ENCODE measurements at regions of chr16 and their contacts with region 1.

Region 1: GRCh38 chr16:3443108-3444031 is at the starts of genes NAA60 and ZNF597:
- DNase-seq: peak; percentile 85
- H3K4me3 ChIP-seq: peak within 1 kb of the TSS; percentile 66 to 68
- H3K27ac ChIP-seq: peak within 1 kb of the TSS; percentile 58 to 83
- H3K4me1 ChIP-seq: peaks cover 0 to 3% of the 10 kb centered on the region in 2 experiments; a peak in 1 of 4 replicates
- H3K27me3 ChIP-seq: no peaks in the 10 kb centered on the region
- CTCF ChIP-seq: no peak
- EP300 ChIP-seq: no peak
- RAD21 ChIP-seq: no peak
- polyA plus RNA-seq, gene NAA60: 17.2 and 21.5 TPM in 2 replicates
- polyA plus RNA-seq, gene ZNF597: 1.1 and 1.3 TPM in 2 replicates

Region 2: DNA sequence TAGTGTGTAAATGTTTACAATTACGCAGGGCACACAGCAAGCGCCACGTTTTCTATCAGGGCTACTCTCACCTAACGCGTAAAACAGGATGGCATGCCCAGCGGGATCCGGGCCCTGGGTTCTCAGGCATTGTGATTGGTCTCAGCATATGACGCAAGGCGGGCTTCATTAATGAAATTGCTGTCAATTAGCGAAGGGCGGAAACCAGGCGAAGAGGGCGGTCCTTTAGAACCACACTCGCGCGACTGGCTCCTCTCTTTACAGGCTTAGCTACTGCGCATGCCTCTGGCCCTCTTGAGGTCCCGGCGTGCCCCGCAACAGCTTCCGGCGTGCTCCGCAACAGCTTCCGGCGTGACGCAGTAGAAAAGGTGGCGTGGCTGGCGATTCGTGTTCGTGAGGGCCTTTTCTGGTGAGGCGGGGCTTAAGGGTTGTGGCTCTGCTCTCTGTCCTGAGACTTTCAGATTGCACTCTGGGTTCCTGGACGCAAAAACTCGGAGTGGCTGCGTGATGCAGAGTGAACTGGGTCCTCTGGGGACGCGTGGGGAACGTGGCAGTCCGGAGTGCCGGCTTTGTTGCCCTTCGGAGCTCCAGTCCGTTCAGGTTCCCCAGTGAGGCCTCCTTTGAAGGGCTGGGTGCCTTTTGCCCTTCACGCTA is 78.5 kb before region 1 on chr16:
- CTCF ChIA-PET with region 1: no interaction called
- POLR2A ChIA-PET with region 1: interaction called, 11 read pairs
- DNase-seq: peak; percentile 85
- H3K4me3 ChIP-seq: peak overlapping the region; percentile 56 to 68
- H3K27ac ChIP-seq: peak overlapping the region; percentile 72 to 81
- H3K4me1 ChIP-seq: no peaks in the 10 kb centered on the region; a peak in 1 of 4 replicates
- H3K27me3 ChIP-seq: no peaks in the 10 kb centered on the region
- CTCF ChIP-seq: no peak
- EP300 ChIP-seq: no peak
- RAD21 ChIP-seq: no peak

Region 3: DNA sequence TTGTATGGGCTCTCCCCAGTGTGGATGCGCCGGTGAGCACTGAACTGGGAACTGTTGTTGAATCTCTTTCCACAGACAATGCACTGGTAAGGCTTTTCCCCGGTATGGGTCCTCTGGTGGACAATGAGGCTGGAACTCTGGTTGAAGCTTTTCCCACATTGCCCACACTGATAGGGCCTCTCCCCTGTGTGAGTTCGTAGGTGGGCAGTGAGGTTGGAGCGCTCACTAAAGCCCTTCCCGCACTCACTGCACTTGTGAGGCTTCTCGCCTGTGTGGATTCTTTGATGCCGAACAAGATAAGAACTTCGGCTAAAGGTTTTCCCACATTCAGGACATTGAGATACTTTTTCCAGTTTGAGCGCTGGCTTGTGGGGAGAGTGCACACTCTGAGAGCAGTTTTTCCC is 60.3 kb before region 1 on chr16:
- CTCF ChIA-PET with region 1: no interaction called
- POLR2A ChIA-PET with region 1: no interaction called
- DNase-seq: no peak
- H3K4me3 ChIP-seq: peak overlapping the region in 1 of 2 experiments; percentile 22; a peak in 1 of 4 replicates
- H3K27ac ChIP-seq: no peak overlapping the region
- H3K4me1 ChIP-seq: no peaks in the 10 kb centered on the region
- H3K27me3 ChIP-seq: no peaks in the 10 kb centered on the region
- CTCF ChIP-seq: no peak
- EP300 ChIP-seq: no peak
- RAD21 ChIP-seq: no peak

Region 4: GRCh38 chr16:3457434-3458252 is 14.3 kb after region 1 on chr16:
- CTCF ChIA-PET with region 1: interaction called, 3 read pairs
- POLR2A ChIA-PET with region 1: interaction called, 14 read pairs
- DNase-seq: peak; percentile 100
- H3K4me3 ChIP-seq: peak overlapping the region; percentile 69 to 81
- H3K27ac ChIP-seq: peak overlapping the region; percentile 79 to 94
- H3K4me1 ChIP-seq: peaks cover 17 to 19% of the 10 kb centered on the region in 2 experiments; a peak in 3 of 4 replicates
- H3K27me3 ChIP-seq: no peaks in the 10 kb centered on the region
- CTCF ChIP-seq: peak; percentile 41
- EP300 ChIP-seq: no peak
- RAD21 ChIP-seq: peak; percentile 46